ENCODE measurements at regions of chr1 and their contacts with region 1.

Region 1: GRCh38 chr1:227305894-227306626 is 12.2 kb downstream of the CDC42BPA start:
- DNase-seq: no peak
- H3K4me3 ChIP-seq: no peak overlapping the region
- H3K27ac ChIP-seq: no peak overlapping the region
- H3K4me1 ChIP-seq: no peaks in the 10 kb centered on the region
- H3K27me3 ChIP-seq: no peaks in the 10 kb centered on the region
- CTCF ChIP-seq: no peak
- POLR2A ChIP-seq: no peak

Region 2: GRCh38 chr1:227280836-227281235 is 25.2 kb before region 1 on chr1:
- intact Hi-C with region 1: loop called (anchors 2 kb)
- DNase-seq: no peak
- H3K4me3 ChIP-seq: no peak overlapping the region
- H3K27ac ChIP-seq: no peak overlapping the region
- H3K4me1 ChIP-seq: no peaks in the 10 kb centered on the region
- H3K27me3 ChIP-seq: no peaks in the 10 kb centered on the region
- CTCF ChIP-seq: no peak
- POLR2A ChIP-seq: no peak

Region 3: GRCh38 chr1:227416156-227416830 is 110.2 kb after region 1 on chr1:
- intact Hi-C with region 1: no loop called
- DNase-seq: no peak
- H3K4me3 ChIP-seq: no peak overlapping the region
- H3K27ac ChIP-seq: no peak overlapping the region
- H3K4me1 ChIP-seq: no peaks in the 10 kb centered on the region
- H3K27me3 ChIP-seq: no peaks in the 10 kb centered on the region
- CTCF ChIP-seq: no peak
- POLR2A ChIP-seq: no peak